ENCODE measurements at regions of chr10 and their contacts with region 1.

Region 1: DNA sequence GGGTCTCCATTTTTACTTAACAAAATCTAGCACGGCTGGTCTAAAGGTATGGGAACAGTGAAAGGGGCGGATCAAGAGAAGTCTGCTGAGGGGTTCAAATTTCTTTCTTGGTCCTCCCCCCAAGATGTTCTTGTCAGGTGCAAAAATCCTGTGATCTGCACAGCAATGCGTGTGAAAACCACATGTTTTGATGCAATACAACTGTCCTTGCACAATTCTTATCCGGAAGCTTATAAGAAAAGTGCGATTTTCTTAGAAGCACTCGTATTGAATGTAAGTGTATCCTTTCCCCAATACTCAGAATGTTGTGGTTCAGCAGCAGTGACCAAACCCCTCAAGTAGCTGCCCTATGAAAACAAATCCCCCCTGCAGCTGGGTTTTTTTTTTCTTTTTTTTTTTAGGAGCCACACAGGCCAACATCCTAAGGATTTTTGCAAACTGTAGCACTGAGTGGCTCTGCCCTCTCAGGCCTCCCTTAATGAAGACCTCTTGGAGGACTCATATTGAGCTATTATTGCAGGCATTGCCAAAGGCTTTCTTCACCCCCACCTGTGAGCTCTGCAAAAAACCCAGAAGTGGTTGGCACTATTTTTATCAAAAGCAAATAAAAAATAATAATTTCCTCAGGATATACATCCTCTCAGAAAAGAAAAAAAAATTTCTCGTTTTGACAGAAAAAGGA is 151.9 kb upstream of the ITGB1 start:
- DNase-seq: peak; percentile 50
- H3K4me3 Mint-ChIP-seq: peak overlapping the region; percentile 59
- H3K27ac Mint-ChIP-seq: peak overlapping the region; percentile 84
- H3K4me1 Mint-ChIP-seq: peaks cover 95% of the 10 kb centered on the region
- H3K27me3 Mint-ChIP-seq: no peaks in the 10 kb centered on the region

Region 2: DNA sequence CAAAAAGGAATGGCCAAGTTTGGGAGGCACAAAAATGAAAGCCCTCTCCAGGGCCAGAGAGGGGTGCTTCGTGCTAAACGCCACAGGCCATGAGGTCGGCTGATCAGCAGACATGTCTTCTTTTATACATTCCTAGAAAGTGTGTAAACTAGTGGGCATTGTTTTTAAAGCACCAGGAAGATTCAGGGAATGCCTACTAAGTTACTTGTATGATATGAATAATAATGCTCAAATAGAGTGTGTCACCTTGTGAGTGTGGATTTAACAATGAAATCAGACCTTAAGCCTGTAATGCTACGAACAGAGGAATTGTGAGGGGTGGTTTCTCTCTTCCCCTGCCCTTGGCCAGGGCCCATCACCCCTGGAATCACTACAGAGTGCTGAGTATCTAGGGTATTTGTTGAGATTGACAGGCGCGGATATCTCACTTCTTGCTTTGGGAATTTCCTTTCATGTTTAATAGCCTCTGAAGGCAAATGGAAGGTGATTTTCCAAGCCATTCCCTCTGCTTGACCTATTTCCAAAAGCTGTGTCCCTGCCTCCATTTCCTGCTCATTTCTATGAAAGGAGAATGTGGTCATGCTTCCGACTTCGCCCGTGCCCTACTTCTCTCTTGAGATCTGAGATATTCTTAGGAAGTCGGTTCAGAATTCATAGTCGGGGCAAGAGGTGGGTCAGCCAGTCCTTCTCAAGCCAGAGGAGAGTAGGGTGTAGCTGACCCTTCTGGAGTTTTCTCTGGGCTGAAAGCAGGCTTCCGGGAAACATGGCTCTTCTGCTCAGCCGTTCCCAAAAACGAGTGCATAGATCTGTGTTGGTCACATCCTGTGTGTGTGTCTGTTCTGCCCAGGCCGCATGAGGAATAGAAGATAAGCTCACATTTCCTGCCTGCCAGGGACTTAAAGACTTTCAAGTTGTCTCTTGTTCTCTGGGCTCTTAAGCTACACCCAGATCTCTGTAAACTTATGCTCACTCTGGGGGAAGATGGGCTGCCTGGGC is 15.9 kb after region 1 on chr10:
- CTCF ChIA-PET with region 1: interaction called, 35 read pairs
- POLR2A ChIA-PET with region 1: interaction called, 408 read pairs
- DNase-seq: peak; percentile 62
- H3K4me3 Mint-ChIP-seq: peak overlapping the region; percentile 18
- H3K27ac Mint-ChIP-seq: peak overlapping the region; percentile 94
- H3K4me1 Mint-ChIP-seq: peaks cover 87% of the 10 kb centered on the region
- H3K27me3 Mint-ChIP-seq: no peaks in the 10 kb centered on the region

Region 3: DNA sequence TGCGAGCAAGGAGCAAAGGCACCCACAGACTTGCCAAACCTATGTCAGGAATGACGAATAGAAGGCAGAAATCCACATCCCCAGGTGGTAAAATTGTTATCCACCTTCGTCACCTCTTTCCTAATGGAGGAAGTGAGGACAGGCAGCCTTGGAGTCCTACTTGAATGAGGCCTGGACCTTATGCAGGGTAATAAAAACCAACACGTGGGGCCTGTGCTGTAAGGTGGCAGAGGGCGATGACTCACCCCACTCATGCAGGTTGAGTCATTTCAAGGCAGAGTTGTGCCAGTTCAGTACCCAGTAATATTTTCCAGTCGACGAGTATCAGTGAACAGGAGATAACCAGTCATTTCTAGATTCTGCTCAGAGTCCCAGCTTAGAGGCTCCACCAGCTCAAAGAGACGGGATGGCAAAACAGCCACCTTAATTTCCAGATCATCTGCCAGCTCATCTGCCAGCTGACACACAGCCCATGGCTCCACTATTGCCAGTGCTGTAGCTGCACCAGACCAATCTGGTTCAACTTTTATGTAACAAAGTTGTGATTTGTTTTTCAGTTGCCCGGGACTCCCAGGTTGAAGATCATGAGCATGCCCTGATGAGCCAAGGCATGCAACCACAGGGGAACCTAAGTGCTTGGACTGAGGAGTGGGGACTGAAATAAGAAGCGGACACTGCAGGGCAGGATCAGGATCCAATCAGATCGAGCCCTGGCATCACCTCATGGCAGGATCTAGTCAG is 24.3 kb after region 1 on chr10:
- CTCF ChIA-PET with region 1: interaction called, 27 read pairs
- POLR2A ChIA-PET with region 1: interaction called, 408 read pairs
- DNase-seq: peak; percentile 84
- H3K4me3 Mint-ChIP-seq: no peak overlapping the region
- H3K27ac Mint-ChIP-seq: peak overlapping the region; percentile 90
- H3K4me1 Mint-ChIP-seq: peaks cover 91% of the 10 kb centered on the region
- H3K27me3 Mint-ChIP-seq: no peaks in the 10 kb centered on the region

Region 4: GRCh38 chr10:33204049-33204448 is 94.1 kb after region 1 on chr10:
- CTCF ChIA-PET with region 1: no interaction called
- POLR2A ChIA-PET with region 1: no interaction called
- DNase-seq: no peak
- H3K4me3 Mint-ChIP-seq: no peak overlapping the region
- H3K27ac Mint-ChIP-seq: no peak overlapping the region
- H3K4me1 Mint-ChIP-seq: no peaks in the 10 kb centered on the region
- H3K27me3 Mint-ChIP-seq: no peaks in the 10 kb centered on the region